H1 (cell line): ENCODE measurements at regions of chr1 and their contacts with region 1.

Region 1: GRCh38 chr1:70205434-70206118 is at the start of gene LRRC40:
- DNase-seq: peak; percentile 82 to 98
- H3K4me3 ChIP-seq: peak within 1 kb of the TSS; percentile 84 to 99 (median 95)
- H3K27ac ChIP-seq: peak within 1 kb of the TSS; percentile 91
- H3K4me1 ChIP-seq: peaks cover 0 to 3% (median 0%) of the 10 kb centered on the region in 4 experiments; a peak in 1 of 7 replicates
- H3K27me3 ChIP-seq: no peaks in the 10 kb centered on the region
- CTCF ChIP-seq: no peak
- EP300 ChIP-seq: peak in 1 of 2 experiments; percentile 16; a peak in 1 of 3 replicates
- POLR2A ChIP-seq: peak; percentile 69 to 93
- RAD21 ChIP-seq: no peak
- total RNA-seq, gene LRRC40: 30.8 and 31.3 TPM in 2 replicates

Region 2: DNA sequence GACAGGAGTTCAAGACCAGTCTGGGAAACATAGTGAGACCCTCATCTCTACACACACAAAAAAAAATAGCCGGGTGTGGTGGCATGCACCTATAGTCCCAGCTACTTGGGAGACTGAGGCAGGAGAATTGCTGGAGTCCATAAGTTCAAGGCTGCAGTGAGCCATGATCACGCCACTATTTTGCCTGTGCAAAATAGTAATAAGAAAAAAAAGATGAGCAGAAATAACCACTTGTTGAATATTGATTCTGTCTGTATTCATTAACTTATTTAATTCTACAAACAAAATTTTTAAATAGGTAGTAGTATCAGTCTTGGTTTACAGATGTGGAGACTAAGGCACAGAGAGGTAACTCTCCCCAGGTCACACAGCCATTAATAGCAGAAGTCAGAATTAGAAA is 17.1 kb before region 1 on chr1:
- CTCF ChIA-PET with region 1: no interaction called
- POLR2A ChIA-PET with region 1: no interaction called
- DNase-seq: no peak
- H3K4me3 ChIP-seq: no peak overlapping the region
- H3K27ac ChIP-seq: no peak overlapping the region
- H3K4me1 ChIP-seq: no peaks in the 10 kb centered on the region
- H3K27me3 ChIP-seq: no peaks in the 10 kb centered on the region
- CTCF ChIP-seq: no peak
- EP300 ChIP-seq: no peak
- POLR2A ChIP-seq: no peak
- RAD21 ChIP-seq: no peak

Region 3: DNA sequence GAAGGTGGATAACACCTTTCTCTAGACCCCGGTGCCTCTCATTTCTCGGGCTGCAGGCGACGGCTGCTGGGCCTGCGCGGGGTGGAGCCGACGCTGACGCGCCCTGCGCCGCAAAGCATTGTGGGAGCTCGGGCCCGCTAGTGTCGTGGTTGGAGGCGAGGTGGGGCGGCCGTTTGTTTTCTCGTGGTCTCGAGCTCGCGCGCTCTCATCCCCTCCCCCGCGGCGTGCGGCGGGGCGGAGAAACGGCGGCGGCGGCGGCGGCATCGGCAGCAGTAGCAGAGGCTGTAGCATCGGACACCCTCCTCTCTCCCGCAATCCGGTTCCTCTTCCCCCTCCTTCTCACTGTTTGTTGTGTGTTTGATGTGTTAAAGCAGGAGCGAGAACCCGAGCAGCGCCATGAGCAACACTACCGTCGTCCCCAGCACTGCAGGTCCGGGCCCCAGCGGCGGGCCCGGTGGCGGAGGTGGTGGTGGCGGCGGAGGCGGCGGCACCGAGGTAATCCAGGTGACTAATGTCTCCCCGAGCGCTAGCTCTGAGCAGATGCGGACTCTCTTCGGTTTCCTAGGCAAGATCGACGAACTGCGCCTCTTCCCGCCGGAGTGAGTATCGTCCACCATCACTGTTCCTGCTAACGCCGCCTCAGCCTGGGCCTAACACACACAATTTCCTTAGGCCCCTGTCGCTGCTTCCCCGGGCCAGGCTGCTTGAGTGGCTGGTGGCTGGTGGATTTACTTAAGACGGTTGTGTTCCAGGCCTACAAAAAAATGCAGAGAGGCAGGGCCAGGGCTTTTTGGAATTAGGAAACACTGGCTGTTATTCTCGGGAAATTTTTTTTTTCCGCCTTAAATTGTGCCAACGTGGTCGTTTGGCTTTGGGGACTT is 15.9 kb after region 1 on chr1 and contains the start of gene SRSF11:
- CTCF ChIA-PET with region 1: interaction called, 7 read pairs
- POLR2A ChIA-PET with region 1: interaction called, 67 read pairs
- DNase-seq: peak; percentile 73 to 98
- H3K4me3 ChIP-seq: peak within 1 kb of the TSS; percentile 92 to 95 (median 94)
- H3K27ac ChIP-seq: peak within 1 kb of the TSS; percentile 94
- H3K4me1 ChIP-seq: no peaks in the 10 kb centered on the region
- H3K27me3 ChIP-seq: no peaks in the 10 kb centered on the region
- CTCF ChIP-seq: no peak
- EP300 ChIP-seq: no peak; a peak in 1 of 3 replicates
- POLR2A ChIP-seq: peak; percentile 75 to 99
- RAD21 ChIP-seq: no peak
- total RNA-seq, gene SRSF11: 169 and 183 TPM in 2 replicates